ENCODE measurements at regions of chr16 and their contacts with region 1.

Region 1: DNA sequence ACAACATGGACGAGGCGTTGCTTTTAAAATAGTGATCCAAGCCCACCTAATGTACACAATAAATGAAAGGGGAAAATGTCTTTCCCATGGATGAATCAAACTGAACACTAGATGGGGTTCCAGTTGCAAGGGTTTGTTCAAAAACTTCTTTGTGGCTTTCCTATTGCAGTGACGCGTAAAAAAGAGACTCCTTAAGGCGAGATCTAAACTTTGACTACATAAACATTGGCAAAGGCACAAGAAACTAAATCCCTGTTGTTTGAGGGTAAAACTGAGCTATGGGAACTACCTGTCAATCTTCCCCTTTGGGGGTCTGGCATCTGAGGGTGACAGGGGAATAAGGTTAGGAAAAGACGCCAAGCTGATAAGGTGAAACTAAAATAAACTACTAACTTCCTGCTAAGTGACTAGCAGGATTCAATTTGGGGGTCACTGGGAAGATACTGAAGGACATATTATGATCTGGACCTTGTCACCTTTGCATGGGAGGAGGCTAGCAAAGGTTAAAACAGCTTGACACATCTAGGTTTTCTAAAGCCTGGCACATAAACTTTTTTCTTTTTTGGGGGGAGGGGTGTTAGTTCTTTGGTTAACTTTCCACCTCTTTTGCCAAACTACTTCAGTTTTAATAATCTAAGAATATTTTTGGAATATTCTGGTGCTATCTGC is 4.7 kb downstream of the SALL1 start:
- DNase-seq: no peak
- ATAC-seq: no peak
- H3K4me3 ChIP-seq: no peak overlapping the region
- H3K27ac ChIP-seq: no peak overlapping the region
- H3K4me1 ChIP-seq: peaks cover 0 to 15% (median 8%) of the 10 kb centered on the region in 9 donors
- H3K27me3 ChIP-seq: peaks cover 15 to 90% (median 75%) of the 10 kb centered on the region in 7 donors
- CTCF ChIP-seq: peak in 2 of 9 donors; percentile 18 to 23

Region 2: GRCh38 chr16:51113236-51114125 is 32.9 kb before region 1 on chr16:
- intact Hi-C with region 1: no loop called
- DNase-seq: no peak
- ATAC-seq: no peak
- H3K4me3 ChIP-seq: peak overlapping the region in 5 of 10 donors; percentile 10 to 26 (median 18)
- H3K27ac ChIP-seq: no peak overlapping the region
- H3K4me1 ChIP-seq: peaks cover 0 to 9% (median 0%) of the 10 kb centered on the region in 9 donors
- H3K27me3 ChIP-seq: peaks cover 0 to 72% (median 58%) of the 10 kb centered on the region in 7 donors
- CTCF ChIP-seq: no peak

Region 3: DNA sequence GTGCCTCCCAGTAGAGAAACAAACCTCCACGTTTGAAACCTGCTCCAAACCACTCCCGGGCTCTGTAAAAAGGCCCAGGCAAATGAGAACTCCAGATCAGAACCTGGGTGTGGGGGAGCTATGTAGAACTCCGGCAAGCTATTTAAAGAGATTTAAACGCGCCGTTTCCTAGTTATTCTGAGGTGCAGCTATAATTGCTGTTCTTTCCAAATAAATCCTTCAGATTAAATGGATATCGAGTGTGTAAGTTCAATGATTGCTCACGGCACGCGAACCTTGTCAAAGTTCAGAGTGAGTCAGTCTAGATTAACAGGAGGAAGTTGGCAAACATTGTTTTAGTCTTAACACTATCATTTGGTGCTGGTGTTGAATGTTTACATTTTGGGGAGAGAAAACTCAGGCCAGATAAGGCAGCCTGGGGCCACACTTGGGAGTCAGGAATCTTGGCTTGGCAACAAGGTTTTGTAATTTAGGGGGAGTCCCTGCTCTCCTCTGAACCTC is 97.6 kb after region 1 on chr16:
- intact Hi-C with region 1: no loop called
- DNase-seq: no peak
- ATAC-seq: no peak
- H3K4me3 ChIP-seq: no peak overlapping the region
- H3K27ac ChIP-seq: no peak overlapping the region
- H3K4me1 ChIP-seq: no peaks in the 10 kb centered on the region
- H3K27me3 ChIP-seq: peaks cover 0 to 7% (median 0%) of the 10 kb centered on the region in 7 donors
- CTCF ChIP-seq: no peak

Region 4: GRCh38 chr16:51756447-51757123 is 610.2 kb after region 1 on chr16:
- intact Hi-C with region 1: loop called in 1 of 10 experiments (anchors 10 kb)
- DNase-seq: no peak
- ATAC-seq: no peak
- H3K4me3 ChIP-seq: no peak overlapping the region
- H3K27ac ChIP-seq: no peak overlapping the region
- H3K4me1 ChIP-seq: no peaks in the 10 kb centered on the region
- H3K27me3 ChIP-seq: peaks cover 0 to 47% (median 14%) of the 10 kb centered on the region in 7 donors
- CTCF ChIP-seq: no peak

Region 5: GRCh38 chr16:51868630-51869029 is 722.2 kb after region 1 on chr16:
- intact Hi-C with region 1: no loop called
- DNase-seq: no peak
- ATAC-seq: no peak
- H3K4me3 ChIP-seq: no peak overlapping the region
- H3K27ac ChIP-seq: no peak overlapping the region
- H3K4me1 ChIP-seq: no peaks in the 10 kb centered on the region
- H3K27me3 ChIP-seq: peaks cover 0 to 13% (median 0%) of the 10 kb centered on the region in 7 donors
- CTCF ChIP-seq: no peak